Breast epithelium (tissue), 4 donors: ENCODE measurements at regions of chr6 and their contacts with region 1.

Region 1: DNA sequence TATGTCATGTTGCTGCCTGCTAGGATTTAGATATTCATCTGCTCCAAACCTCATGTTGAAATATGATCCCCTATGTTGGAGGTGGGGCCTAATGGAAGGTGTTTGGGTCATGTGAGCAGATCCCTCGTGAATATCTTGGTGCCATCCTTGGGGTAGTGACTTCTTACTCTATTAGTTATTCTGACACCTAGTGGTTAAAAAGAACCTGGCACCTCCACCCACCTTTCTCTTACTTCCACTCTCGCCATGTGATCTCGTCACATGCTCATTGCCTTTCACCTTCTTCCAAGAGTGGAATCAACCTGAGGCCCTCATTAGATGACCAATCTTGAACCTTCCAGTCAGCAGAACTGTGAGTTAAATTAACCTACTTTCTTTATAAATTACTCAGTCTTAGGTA is 549.4 kb upstream of the SYNCRIP start:
- DNase-seq: no peak
- H3K4me3 ChIP-seq: no peak overlapping the region
- H3K27ac ChIP-seq: no peak overlapping the region
- H3K4me1 ChIP-seq: no peaks in the 10 kb centered on the region
- H3K27me3 ChIP-seq: no peaks in the 10 kb centered on the region
- CTCF ChIP-seq: no peak
- POLR2A ChIP-seq: no peak

Region 2: GRCh38 chr6:85810558-85810957 is 381.6 kb before region 1 on chr6:
- intact Hi-C with region 1: loop called (anchors 5 kb)
- DNase-seq: no peak
- H3K4me3 ChIP-seq: no peak overlapping the region
- H3K27ac ChIP-seq: no peak overlapping the region
- H3K4me1 ChIP-seq: no peaks in the 10 kb centered on the region
- H3K27me3 ChIP-seq: no peaks in the 10 kb centered on the region
- CTCF ChIP-seq: no peak
- POLR2A ChIP-seq: no peak

Region 3: GRCh38 chr6:85892346-85892745 is 299.8 kb before region 1 on chr6:
- intact Hi-C with region 1: no loop called
- DNase-seq: no peak
- H3K4me3 ChIP-seq: no peak overlapping the region
- H3K27ac ChIP-seq: no peak overlapping the region
- H3K4me1 ChIP-seq: no peaks in the 10 kb centered on the region
- H3K27me3 ChIP-seq: no peaks in the 10 kb centered on the region
- CTCF ChIP-seq: no peak
- POLR2A ChIP-seq: no peak

Region 4: DNA sequence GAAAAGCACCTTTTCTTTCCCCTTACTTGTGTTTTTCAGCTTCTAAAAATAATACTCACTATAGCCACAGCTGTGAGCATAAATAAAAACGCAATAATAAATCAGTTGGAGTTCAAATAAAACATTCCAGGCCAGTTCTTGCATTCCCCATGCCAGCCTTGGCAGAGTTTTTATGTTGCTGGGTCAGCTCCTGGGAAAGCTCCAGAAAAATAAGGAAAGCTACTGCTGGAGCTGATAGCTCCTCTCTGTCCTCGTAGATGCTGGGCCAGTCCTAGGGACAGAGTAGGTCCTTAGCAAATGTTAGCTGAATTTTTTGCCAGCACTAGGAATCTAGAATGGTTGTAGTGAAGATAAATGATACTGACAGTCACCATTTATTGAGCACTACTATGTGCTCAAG is 160.4 kb before region 1 on chr6:
- intact Hi-C with region 1: loop called (anchors 5 kb)
- DNase-seq: no peak
- H3K4me3 ChIP-seq: no peak overlapping the region
- H3K27ac ChIP-seq: no peak overlapping the region
- H3K4me1 ChIP-seq: no peaks in the 10 kb centered on the region
- H3K27me3 ChIP-seq: no peaks in the 10 kb centered on the region
- CTCF ChIP-seq: no peak
- POLR2A ChIP-seq: no peak